SK-N-SH (cell line): ENCODE measurements at regions of chr15 and their contacts with region 1.

Region 1: GRCh38 chr15:89893696-89894455 is at the start of gene AP3S2:
- DNase-seq: peak; percentile 89
- H3K4me3 ChIP-seq: peak within 1 kb of the TSS; percentile 93 to 94
- H3K27ac ChIP-seq: peak within 1 kb of the TSS; percentile 85 to 92
- H3K4me1 ChIP-seq: peaks cover 0 to 2% of the 10 kb centered on the region in 2 experiments; a peak in 1 of 4 replicates
- H3K27me3 ChIP-seq: no peaks in the 10 kb centered on the region
- CTCF ChIP-seq: no peak
- EP300 ChIP-seq: no peak; a peak in 1 of 4 replicates
- RAD21 ChIP-seq: peak; percentile 20; the same call in 1 of the 2 replicates
- polyA plus RNA-seq, gene AP3S2: 11.9 and 19.4 TPM in 2 replicates

Region 2: DNA sequence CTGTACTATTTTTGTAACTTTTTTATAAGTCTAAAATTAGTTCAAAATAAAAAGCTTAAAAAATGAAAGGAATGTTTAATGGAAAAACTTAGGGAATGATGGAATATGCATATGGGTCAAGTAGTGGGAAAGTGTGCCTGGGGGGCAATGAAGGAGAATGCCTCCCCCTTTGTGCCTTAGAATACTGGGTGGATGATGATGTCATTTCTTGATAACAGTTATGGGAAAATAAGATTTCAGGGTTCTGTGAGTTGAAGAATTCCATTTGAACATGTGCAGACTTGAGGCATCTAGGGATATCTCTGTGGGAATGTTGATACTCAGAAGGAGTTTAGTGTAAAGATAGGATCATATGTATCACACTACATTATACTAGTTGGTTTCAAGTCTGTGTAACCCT is 189.5 kb before region 1 on chr15:
- CTCF ChIA-PET with region 1: no interaction called
- POLR2A ChIA-PET with region 1: no interaction called
- DNase-seq: no peak
- H3K4me3 ChIP-seq: no peak overlapping the region
- H3K27ac ChIP-seq: no peak overlapping the region
- H3K4me1 ChIP-seq: peaks cover 0 to 6% of the 10 kb centered on the region in 2 experiments; a peak in 1 of 4 replicates
- H3K27me3 ChIP-seq: peaks cover 5% of the 10 kb centered on the region; the same call in 1 of the 2 replicates
- CTCF ChIP-seq: no peak
- EP300 ChIP-seq: no peak
- RAD21 ChIP-seq: no peak

Region 3: GRCh38 chr15:89880721-89881120 is 13.2 kb before region 1 on chr15:
- CTCF ChIA-PET with region 1: interaction called, 58 read pairs
- POLR2A ChIA-PET with region 1: no interaction called
- DNase-seq: no peak
- H3K4me3 ChIP-seq: no peak overlapping the region
- H3K27ac ChIP-seq: no peak overlapping the region
- H3K4me1 ChIP-seq: no peaks in the 10 kb centered on the region
- H3K27me3 ChIP-seq: no peaks in the 10 kb centered on the region
- CTCF ChIP-seq: no peak
- EP300 ChIP-seq: no peak
- RAD21 ChIP-seq: no peak

Region 4: DNA sequence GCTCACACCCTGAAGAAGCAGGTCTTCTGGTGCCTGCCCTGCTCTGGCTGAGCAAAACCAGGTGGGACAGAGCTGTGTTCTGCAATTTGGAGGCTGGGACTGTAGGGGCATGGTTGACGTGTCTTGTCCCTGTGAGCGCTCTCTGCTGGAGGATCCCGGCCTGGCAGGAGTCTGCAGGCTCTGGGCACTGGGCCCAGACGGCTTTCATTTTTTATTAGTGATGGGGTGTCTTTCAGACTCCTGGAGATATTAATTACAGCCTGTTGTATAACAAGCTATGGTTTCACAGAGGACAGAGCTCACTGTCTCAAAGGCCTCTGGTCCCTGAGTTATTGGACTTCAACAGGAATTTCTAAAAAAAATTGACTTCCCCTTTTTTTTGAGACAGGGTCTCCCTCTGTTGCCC is 77.7 kb after region 1 on chr15:
- CTCF ChIA-PET with region 1: interaction called, 13 read pairs
- POLR2A ChIA-PET with region 1: interaction called, 4 read pairs
- DNase-seq: peak; percentile 80
- H3K4me3 ChIP-seq: no peak overlapping the region; a peak in 1 of 4 replicates
- H3K27ac ChIP-seq: no peak overlapping the region
- H3K4me1 ChIP-seq: no peaks in the 10 kb centered on the region; a peak in 1 of 4 replicates
- H3K27me3 ChIP-seq: no peaks in the 10 kb centered on the region
- CTCF ChIP-seq: peak; percentile 64
- EP300 ChIP-seq: no peak
- RAD21 ChIP-seq: peak; percentile 60

Region 5: GRCh38 chr15:90020021-90020735 is 126.3 kb after region 1 on chr15:
- CTCF ChIA-PET with region 1: no interaction called
- POLR2A ChIA-PET with region 1: no interaction called
- DNase-seq: no peak
- H3K4me3 ChIP-seq: no peak overlapping the region
- H3K27ac ChIP-seq: no peak overlapping the region
- H3K4me1 ChIP-seq: no peaks in the 10 kb centered on the region
- H3K27me3 ChIP-seq: no peaks in the 10 kb centered on the region
- CTCF ChIP-seq: no peak
- EP300 ChIP-seq: no peak
- RAD21 ChIP-seq: no peak

Region 6: GRCh38 chr15:90071208-90071807 is 177.4 kb after region 1 on chr15:
- CTCF ChIA-PET with region 1: interaction called, 29 read pairs
- POLR2A ChIA-PET with region 1: no interaction called
- DNase-seq: peak; percentile 88
- H3K4me3 ChIP-seq: peak overlapping the region in 1 of 2 experiments; percentile 44; a peak in 1 of 4 replicates
- H3K27ac ChIP-seq: no peak overlapping the region
- H3K4me1 ChIP-seq: no peaks in the 10 kb centered on the region; a peak in 1 of 4 replicates
- H3K27me3 ChIP-seq: no peaks in the 10 kb centered on the region
- CTCF ChIP-seq: peak; percentile 87
- EP300 ChIP-seq: no peak
- RAD21 ChIP-seq: peak; percentile 78

Region 7: GRCh38 chr15:90101969-90102890 is 208.4 kb after region 1 on chr15 and contains the start of gene IDH2:
- CTCF ChIA-PET with region 1: interaction called, 4 read pairs
- POLR2A ChIA-PET with region 1: interaction called, 10 read pairs
- DNase-seq: peak; percentile 98
- H3K4me3 ChIP-seq: peak within 1 kb of the TSS; percentile 77 to 79
- H3K27ac ChIP-seq: peak within 1 kb of the TSS; percentile 48 to 81; a peak in 3 of 4 replicates
- H3K4me1 ChIP-seq: peaks cover 12 to 32% of the 10 kb centered on the region in 2 experiments; a peak in 2 of 4 replicates
- H3K27me3 ChIP-seq: no peaks in the 10 kb centered on the region
- CTCF ChIP-seq: no peak
- EP300 ChIP-seq: no peak
- RAD21 ChIP-seq: no peak
- polyA plus RNA-seq, gene IDH2: 24.7 and 25.2 TPM in 2 replicates